ENCODE measurements at regions of chr14 and their contacts with region 1.

Region 1: GRCh38 chr14:78598041-78598920 is 428.1 kb downstream of the NRXN3 start:
- DNase-seq: peak; percentile 50 to 68
- ATAC-seq: peak; percentile 97 to 99
- H3K4me3 ChIP-seq: no peak overlapping the region
- H3K27ac ChIP-seq: no peak overlapping the region
- H3K4me1 ChIP-seq: no peaks in the 10 kb centered on the region
- CTCF ChIP-seq: peak; percentile 79
- EP300 ChIP-seq: no peak
- POLR2A ChIP-seq: no peak
- RAD21 ChIP-seq: peak; percentile 72 to 81

Region 2: DNA sequence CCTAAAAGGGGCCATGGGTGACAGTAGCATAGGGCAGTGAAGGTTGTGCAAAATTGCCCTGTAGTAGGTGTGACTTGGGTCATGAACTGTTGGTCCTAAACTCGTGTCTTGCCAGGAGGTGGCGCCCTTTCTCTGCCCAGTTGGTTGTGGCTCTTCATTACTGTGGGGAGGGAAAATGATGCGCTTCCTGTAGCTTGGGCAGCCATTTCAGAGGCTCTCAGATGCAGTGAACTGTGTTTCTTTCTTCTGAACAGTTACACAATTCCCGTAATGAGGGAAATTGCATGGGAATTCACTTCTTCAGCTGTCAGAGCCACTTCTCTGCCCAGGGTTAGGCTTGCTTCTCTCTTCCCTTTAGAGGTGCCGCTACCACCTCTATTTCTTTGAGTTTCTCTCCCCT is 576.2 kb before region 1 on chr14:
- CTCF ChIA-PET with region 1: interaction called, 10 read pairs
- POLR2A ChIA-PET with region 1: no interaction called
- DNase-seq: peak; percentile 38 to 80
- ATAC-seq: peak; percentile 86 to 99
- H3K4me3 ChIP-seq: no peak overlapping the region
- H3K27ac ChIP-seq: no peak overlapping the region
- H3K4me1 ChIP-seq: no peaks in the 10 kb centered on the region
- CTCF ChIP-seq: peak; percentile 52
- EP300 ChIP-seq: no peak
- POLR2A ChIP-seq: no peak
- RAD21 ChIP-seq: peak; percentile 78 to 93

Region 3: DNA sequence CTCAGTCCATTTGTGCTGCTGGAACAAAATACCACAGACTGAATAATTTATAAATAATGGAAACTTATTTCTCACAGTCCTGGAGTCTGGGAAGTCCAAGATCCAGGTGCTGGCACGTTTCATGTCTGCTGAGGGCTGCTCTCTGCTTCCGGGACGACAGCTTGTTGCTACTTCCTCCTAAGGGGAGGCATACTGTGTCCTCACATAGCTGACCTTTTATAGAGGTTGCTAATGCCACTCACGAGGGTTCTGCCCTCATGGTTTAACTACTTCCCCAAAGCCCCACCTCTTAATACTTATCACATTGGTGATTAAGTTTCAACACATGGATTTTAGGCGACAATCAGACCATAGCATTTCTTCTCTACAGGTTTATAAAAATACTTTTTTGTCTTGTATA is 17.1 kb before region 1 on chr14:
- CTCF ChIA-PET with region 1: interaction called, 11 read pairs
- POLR2A ChIA-PET with region 1: no interaction called
- DNase-seq: no peak
- ATAC-seq: no peak
- H3K4me3 ChIP-seq: no peak overlapping the region
- H3K27ac ChIP-seq: no peak overlapping the region
- H3K4me1 ChIP-seq: no peaks in the 10 kb centered on the region
- CTCF ChIP-seq: no peak
- EP300 ChIP-seq: no peak
- POLR2A ChIP-seq: no peak
- RAD21 ChIP-seq: no peak

Region 4: DNA sequence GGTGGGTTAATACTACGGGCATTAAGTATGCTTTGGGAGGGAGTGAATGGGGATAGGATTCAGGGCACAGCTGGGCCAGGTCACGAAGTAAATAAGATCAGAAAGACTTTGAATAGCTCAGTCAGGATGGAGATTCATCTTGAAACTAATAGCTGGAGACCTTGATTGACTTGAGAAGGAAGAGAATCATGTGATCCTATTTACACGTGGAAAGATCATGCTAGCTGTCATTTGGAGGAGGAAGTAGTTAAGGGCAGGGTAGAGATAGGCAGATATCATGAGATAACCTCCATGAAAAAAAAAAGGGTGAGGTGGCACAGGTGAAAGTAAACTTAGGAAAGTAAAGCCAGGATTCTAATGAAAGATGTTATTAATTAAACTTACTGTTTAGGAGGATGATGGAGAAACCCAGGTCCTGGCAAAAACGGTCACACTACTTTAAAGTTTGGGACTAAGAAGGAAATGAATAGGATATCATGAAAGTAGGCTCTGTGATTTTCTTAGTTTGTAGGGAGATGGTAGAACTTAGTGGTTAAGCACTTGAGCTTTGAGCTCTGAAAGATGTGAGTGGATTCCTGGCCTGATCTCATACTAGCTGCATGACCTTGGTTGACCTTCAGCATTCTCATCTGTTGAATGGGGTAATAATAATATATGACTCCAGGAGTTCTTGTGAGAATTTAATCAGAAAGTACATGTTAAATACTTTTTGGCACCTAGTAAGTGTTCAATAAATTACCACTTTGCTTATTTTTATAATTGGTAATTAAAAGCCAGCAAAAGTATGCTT is 10.9 kb after region 1 on chr14:
- CTCF ChIA-PET with region 1: interaction called, 11 read pairs
- POLR2A ChIA-PET with region 1: no interaction called
- DNase-seq: no peak
- ATAC-seq: no peak
- H3K4me3 ChIP-seq: no peak overlapping the region
- H3K27ac ChIP-seq: no peak overlapping the region
- H3K4me1 ChIP-seq: no peaks in the 10 kb centered on the region
- CTCF ChIP-seq: no peak
- EP300 ChIP-seq: no peak
- POLR2A ChIP-seq: no peak
- RAD21 ChIP-seq: no peak

Region 5: DNA sequence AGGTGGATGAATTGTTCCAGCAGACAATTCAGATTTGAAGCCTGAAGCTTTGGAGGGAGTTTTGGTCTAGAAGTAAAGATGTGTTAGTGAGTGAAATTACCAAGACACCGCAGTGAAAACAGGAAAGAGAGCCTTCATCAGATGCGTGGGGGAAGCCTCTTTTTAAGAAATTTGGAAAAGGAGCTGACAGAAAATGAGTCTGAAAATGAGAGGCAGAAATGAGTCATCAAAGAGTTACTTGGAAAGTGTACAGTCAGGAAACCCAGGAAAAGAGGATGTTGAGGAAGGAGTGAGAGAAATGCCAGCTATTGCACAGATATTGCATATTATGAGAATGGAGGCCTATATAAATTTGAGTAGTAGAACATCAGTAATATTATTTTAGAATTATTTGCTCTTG is 92.6 kb after region 1 on chr14:
- CTCF ChIA-PET with region 1: no interaction called
- POLR2A ChIA-PET with region 1: no interaction called
- DNase-seq: no peak
- ATAC-seq: no peak
- H3K4me3 ChIP-seq: no peak overlapping the region
- H3K27ac ChIP-seq: no peak overlapping the region
- H3K4me1 ChIP-seq: no peaks in the 10 kb centered on the region
- CTCF ChIP-seq: no peak
- EP300 ChIP-seq: no peak
- POLR2A ChIP-seq: no peak
- RAD21 ChIP-seq: no peak